PC-9 (cell line): ENCODE measurements at regions of chr3 and their contacts with region 1.

Region 1: GRCh38 chr3:127697551-127698240 is 24.9 kb downstream of the ABTB1 start:
- DNase-seq: peak in 1 of 2 experiments; percentile 44
- H3K4me3 ChIP-seq: no peak overlapping the region
- H3K27ac ChIP-seq: no peak overlapping the region
- H3K4me1 ChIP-seq: no peaks in the 10 kb centered on the region
- H3K27me3 ChIP-seq: no peaks in the 10 kb centered on the region
- CTCF ChIP-seq: no peak

Region 2: GRCh38 chr3:126746395-126747177 is 951.1 kb before region 1 on chr3:
- CTCF ChIA-PET with region 1: no interaction called
- POLR2A ChIA-PET with region 1: no interaction called
- intact Hi-C with region 1: no loop called
- DNase-seq: peak in 1 of 2 experiments; percentile 66
- H3K4me3 ChIP-seq: no peak overlapping the region
- H3K27ac ChIP-seq: no peak overlapping the region
- H3K4me1 ChIP-seq: no peaks in the 10 kb centered on the region
- H3K27me3 ChIP-seq: no peaks in the 10 kb centered on the region
- CTCF ChIP-seq: no peak

Region 3: DNA sequence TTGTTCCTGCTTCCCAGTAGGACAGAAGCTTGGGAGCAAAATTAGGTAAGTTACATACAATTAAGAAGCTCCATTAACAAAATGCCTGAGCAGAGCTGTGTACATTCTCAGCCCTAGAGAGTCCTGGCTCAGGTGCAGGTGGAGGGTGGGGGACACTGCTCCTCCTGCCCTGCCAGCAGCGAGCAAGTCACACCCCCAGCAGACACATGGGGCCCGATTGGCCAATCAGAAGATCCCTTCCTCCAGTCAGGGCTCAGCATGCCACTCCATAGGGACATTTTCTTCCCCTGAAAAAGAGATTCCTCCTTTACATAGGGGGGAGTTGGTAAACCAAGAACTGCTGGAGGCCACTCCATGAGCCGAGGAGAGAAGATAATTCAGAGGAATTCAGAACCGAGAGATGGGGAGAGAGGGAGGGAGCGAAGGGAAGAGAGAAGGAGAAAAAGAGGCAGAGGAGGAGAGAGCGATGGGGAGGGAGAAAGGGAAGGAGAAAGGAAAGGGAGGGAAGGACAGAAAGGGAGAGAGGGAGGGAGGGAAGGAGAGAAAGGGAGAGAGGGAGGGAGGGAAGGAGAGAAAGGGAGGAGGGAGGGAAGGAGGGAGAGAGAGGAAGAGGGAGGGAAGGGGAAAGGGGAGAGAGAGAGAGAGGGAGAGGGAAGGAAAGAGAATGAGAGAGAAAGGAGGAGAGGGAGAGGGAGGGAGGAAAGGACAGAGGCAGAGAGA is 652.5 kb before region 1 on chr3:
- CTCF ChIA-PET with region 1: interaction called, 11 read pairs
- POLR2A ChIA-PET with region 1: no interaction called
- intact Hi-C with region 1: no loop called
- DNase-seq: peak in 1 of 2 experiments; percentile 56
- H3K4me3 ChIP-seq: no peak overlapping the region
- H3K27ac ChIP-seq: no peak overlapping the region
- H3K4me1 ChIP-seq: peaks cover 26% of the 10 kb centered on the region
- H3K27me3 ChIP-seq: peaks cover 4% of the 10 kb centered on the region; the same call in 1 of the 2 replicates
- CTCF ChIP-seq: no peak

Region 4: GRCh38 chr3:127735767-127736704 is 38.3 kb after region 1 on chr3:
- CTCF ChIA-PET with region 1: no interaction called
- POLR2A ChIA-PET with region 1: no interaction called
- intact Hi-C with region 1: no loop called
- DNase-seq: peak in 1 of 2 experiments; percentile 36
- H3K4me3 ChIP-seq: no peak overlapping the region
- H3K27ac ChIP-seq: no peak overlapping the region
- H3K4me1 ChIP-seq: peaks cover 10% of the 10 kb centered on the region
- H3K27me3 ChIP-seq: no peaks in the 10 kb centered on the region
- CTCF ChIP-seq: no peak

Region 5: DNA sequence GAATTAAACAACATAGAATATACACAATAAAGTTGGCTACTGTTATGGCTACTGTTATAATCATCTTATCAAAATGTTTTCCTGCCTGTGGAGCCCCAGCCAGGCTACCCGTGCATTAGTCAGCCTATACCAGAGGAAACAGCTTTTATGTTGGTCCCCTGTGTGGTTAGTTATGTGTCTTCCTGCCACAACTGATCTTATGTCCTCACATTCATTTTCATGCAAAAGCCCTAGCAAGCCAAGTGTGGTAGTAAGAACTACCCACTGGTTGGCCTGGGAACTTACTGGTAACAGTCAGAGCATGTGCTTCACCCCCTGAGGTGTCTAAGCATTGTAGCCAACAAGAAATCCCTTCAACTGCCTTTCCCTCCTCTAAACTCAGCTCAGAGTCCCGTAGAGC is 102.8 kb after region 1 on chr3:
- CTCF ChIA-PET with region 1: no interaction called
- POLR2A ChIA-PET with region 1: interaction called, 15 read pairs
- intact Hi-C with region 1: no loop called
- DNase-seq: no peak
- H3K4me3 ChIP-seq: no peak overlapping the region
- H3K27ac ChIP-seq: peak overlapping the region; percentile 91
- H3K4me1 ChIP-seq: peaks cover 44% of the 10 kb centered on the region
- H3K27me3 ChIP-seq: no peaks in the 10 kb centered on the region
- CTCF ChIP-seq: no peak

Region 6: DNA sequence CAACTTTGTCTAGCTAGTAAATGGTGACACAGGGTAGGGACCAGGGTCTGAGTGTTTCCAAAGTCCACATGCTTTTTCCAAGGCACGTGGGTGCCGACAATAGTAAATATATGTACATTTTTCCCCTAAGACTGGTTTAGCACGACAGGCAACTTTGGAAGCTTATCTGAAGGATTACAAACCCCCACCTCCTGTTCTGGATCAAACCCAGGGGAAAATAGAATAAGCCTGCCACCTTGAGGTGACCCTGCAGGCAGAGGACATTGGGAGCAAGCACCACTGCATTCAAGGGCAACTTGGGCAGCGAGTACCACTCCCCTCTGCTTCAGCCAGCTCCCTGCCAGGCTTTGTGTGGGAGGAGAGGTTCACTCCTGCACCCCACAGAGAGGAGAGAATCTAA is 262.1 kb after region 1 on chr3:
- CTCF ChIA-PET with region 1: interaction called, 7 read pairs
- POLR2A ChIA-PET with region 1: no interaction called
- intact Hi-C with region 1: loop called (anchors 1 kb)
- DNase-seq: peak; percentile 69 to 85
- H3K4me3 ChIP-seq: no peak overlapping the region
- H3K27ac ChIP-seq: no peak overlapping the region
- H3K4me1 ChIP-seq: peaks cover 34% of the 10 kb centered on the region
- H3K27me3 ChIP-seq: no peaks in the 10 kb centered on the region
- CTCF ChIP-seq: peak; percentile 63